WTC11 (cell line): ENCODE measurements at regions of chr2 and their contacts with region 1.

Region 1: DNA sequence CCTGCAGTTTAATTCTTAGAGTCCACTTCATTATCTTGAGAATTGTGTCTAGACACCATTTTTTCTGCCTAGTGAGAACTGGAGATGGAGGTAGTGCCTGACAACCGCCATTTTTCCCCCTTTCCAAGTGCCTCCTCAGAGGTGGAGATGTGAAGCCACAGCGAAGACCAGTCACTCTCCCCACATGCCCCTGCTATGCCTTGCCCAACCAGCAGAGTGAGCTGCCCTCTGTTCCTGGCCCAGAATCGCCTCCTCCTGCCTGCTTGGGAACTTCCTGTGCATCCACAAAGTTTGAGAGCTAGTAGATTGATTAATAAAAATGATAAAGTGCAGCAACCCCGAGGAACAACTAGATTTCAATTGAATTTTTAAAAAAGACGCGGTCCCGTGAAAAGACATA is 123.3 kb downstream of the CLIP4 start:
- DNase-seq: peak; percentile 69
- ATAC-seq: peak; percentile 98
- H3K4me3 Mint-ChIP-seq: no peak overlapping the region
- H3K27ac Mint-ChIP-seq: no peak overlapping the region
- H3K4me1 Mint-ChIP-seq: no peaks in the 10 kb centered on the region
- H3K27me3 Mint-ChIP-seq: no peaks in the 10 kb centered on the region; the same call in 1 of the 2 replicates
- CTCF ChIP-seq: peak; percentile 67

Region 2: DNA sequence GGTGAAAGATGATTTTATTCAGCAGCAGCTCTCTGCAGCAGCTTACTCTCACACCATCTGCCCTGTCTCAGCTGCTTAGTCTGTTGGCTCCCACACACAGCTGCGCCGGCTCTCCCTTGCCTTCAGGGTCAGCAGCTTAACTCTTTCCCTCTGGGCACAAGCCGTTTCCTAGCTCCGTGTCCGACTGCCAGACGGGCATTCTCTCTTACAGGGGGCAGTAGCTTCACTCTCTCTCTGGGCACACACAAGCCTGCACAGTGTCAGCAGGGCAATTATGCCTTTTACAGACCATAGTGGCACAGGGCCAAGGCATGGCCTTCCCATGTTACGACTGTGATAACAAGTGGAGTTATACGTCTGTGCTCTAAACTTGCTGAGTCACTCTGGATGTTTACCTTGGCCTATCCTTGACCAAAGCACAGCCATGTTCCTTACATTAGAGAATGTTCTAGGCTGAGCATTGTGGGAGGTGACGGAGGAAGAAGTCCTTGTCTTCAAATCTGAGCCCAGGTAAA is 195.9 kb before region 1 on chr2:
- CTCF ChIA-PET with region 1: no interaction called
- POLR2A ChIA-PET with region 1: no interaction called
- DNase-seq: no peak
- ATAC-seq: no peak
- H3K4me3 Mint-ChIP-seq: no peak overlapping the region
- H3K27ac Mint-ChIP-seq: no peak overlapping the region
- H3K4me1 Mint-ChIP-seq: peaks cover 17% of the 10 kb centered on the region
- H3K27me3 Mint-ChIP-seq: no peaks in the 10 kb centered on the region
- CTCF ChIP-seq: no peak

Region 3: DNA sequence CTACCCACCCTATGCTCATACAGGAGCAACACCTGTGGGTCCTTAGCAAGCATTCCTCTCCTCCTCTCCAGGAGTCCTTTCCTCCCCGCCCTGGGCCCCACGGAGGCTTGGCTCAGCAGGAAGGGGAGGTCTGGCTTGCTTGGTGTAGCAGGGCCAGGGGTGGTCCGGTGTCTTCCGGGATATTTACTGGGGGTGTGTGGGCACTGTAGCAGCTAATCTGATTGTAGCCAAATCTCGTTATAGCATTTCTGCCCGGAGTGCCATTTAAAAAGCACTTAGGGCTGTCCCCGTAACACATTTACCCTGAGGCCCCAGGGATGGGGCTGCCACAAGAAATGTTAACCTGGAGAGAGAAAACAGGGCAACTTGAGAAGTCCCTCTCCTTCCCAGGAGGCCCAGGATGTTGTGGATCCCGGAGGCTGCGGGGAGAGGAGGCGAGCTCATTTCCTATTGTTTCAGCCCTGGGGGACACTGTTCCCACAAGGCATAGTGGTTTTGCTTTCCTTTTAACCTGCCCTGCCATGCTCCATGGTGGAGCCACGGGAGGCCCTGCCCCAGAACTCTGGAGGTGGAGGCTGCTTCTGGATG is 11.3 kb after region 1 on chr2:
- CTCF ChIA-PET with region 1: interaction called, 10 read pairs
- POLR2A ChIA-PET with region 1: no interaction called
- DNase-seq: no peak
- ATAC-seq: no peak
- H3K4me3 Mint-ChIP-seq: no peak overlapping the region
- H3K27ac Mint-ChIP-seq: no peak overlapping the region
- H3K4me1 Mint-ChIP-seq: no peaks in the 10 kb centered on the region
- H3K27me3 Mint-ChIP-seq: no peaks in the 10 kb centered on the region
- CTCF ChIP-seq: no peak

Region 4: GRCh38 chr2:29273685-29274611 is 35.5 kb after region 1 on chr2:
- CTCF ChIA-PET with region 1: interaction called, 11 read pairs
- POLR2A ChIA-PET with region 1: no interaction called
- DNase-seq: no peak
- ATAC-seq: peak; percentile 67
- H3K4me3 Mint-ChIP-seq: no peak overlapping the region
- H3K27ac Mint-ChIP-seq: no peak overlapping the region
- H3K4me1 Mint-ChIP-seq: peaks cover 25% of the 10 kb centered on the region
- H3K27me3 Mint-ChIP-seq: no peaks in the 10 kb centered on the region
- CTCF ChIP-seq: no peak